BJ (cell line): ENCODE measurements at regions of chr4 and their contacts with region 1.

Region 1: GRCh38 chr4:7067452-7068278 is at the start of gene GRPEL1:
- DNase-seq: peak; percentile 97
- H3K4me3 ChIP-seq: peak within 1 kb of the TSS; percentile 70
- H3K27me3 ChIP-seq: no peaks in the 10 kb centered on the region
- CTCF ChIP-seq: no peak
- polyA plus RNA-seq, gene GRPEL1: 21.1 and 35.2 TPM in 2 replicates

Region 2: GRCh38 chr4:6716018-6716911 is 351.4 kb before region 1 on chr4 and contains the start of gene BLOC1S4:
- CTCF ChIA-PET with region 1: interaction called, 45 read pairs
- POLR2A ChIA-PET with region 1: no interaction called
- DNase-seq: peak; percentile 43
- H3K4me3 ChIP-seq: peak within 1 kb of the TSS; percentile 92
- H3K27me3 ChIP-seq: no peaks in the 10 kb centered on the region
- CTCF ChIP-seq: peak; percentile 9; the same call in 1 of the 2 replicates
- polyA plus RNA-seq, gene BLOC1S4: 10.4 and 12.6 TPM in 2 replicates

Region 3: GRCh38 chr4:6974138-6974848 is 93.4 kb before region 1 on chr4:
- CTCF ChIA-PET with region 1: interaction called, 116 read pairs
- POLR2A ChIA-PET with region 1: no interaction called
- DNase-seq: no peak
- H3K4me3 ChIP-seq: no peak overlapping the region
- H3K27me3 ChIP-seq: no peaks in the 10 kb centered on the region
- CTCF ChIP-seq: peak; percentile 97

Region 4: DNA sequence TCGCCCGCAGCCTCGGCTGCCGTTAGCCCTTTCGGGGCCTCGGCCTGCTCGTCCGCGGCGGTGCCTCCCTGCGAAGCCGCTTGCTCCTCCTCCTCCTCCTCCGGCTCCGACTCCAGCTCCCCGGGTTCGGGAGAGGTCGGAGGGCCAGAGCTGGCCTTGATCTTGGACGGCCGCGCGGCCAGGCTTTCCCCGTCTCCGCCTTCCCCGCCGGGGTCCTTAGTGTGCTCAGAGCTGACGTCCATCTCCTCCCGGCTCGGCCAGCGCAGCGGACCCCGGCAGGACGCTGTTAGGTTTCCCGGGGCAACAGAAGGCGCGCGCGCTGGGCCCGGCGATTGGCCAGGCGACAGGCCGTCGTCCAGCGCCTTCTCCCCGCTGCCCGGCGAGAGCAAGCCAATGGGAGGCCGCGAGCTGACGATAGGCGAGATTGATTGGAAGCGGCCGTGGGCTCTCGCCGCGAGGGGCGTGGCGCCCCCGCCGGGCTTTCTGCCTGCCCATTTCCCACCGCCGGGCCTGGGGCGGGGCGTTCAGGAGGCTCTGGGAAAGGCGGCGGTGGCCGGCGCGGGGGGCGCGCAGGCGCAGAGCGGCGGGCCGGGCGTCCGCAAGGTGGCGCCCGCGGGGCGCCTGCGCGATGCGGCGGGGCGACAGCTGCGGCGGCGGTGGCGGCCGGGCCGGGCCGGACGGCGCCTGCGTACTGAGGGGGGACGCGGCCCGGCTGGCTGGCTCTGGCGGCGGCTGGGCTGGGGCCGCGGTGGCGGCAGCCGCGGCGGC is 24.8 kb before region 1 on chr4 and contains the start of gene TADA2B:
- CTCF ChIA-PET with region 1: interaction called, 45 read pairs
- POLR2A ChIA-PET with region 1: interaction called, 12 read pairs
- DNase-seq: peak; percentile 79
- H3K4me3 ChIP-seq: peak within 1 kb of the TSS; percentile 96
- H3K27me3 ChIP-seq: no peaks in the 10 kb centered on the region
- CTCF ChIP-seq: no peak
- polyA plus RNA-seq, gene TADA2B: 6.1 and 7.3 TPM in 2 replicates

Region 5: GRCh38 chr4:7089213-7089986 is 21.7 kb after region 1 on chr4:
- CTCF ChIA-PET with region 1: interaction called, 11 read pairs
- POLR2A ChIA-PET with region 1: no interaction called
- DNase-seq: no peak
- H3K4me3 ChIP-seq: no peak overlapping the region
- H3K27me3 ChIP-seq: peaks cover 8% of the 10 kb centered on the region
- CTCF ChIP-seq: no peak